GM18951 (cell line): ENCODE measurements at regions of chr1 and their contacts with region 1.

Region 1: GRCh38 chr1:111755331-111756123 is at the start of gene DDX20:
- POLR2A ChIP-seq: peak; percentile 83

Region 2: GRCh38 chr1:111227851-111228747 is 527.4 kb before region 1 on chr1:
- in situ Hi-C with region 1: loop called (anchors 25 kb)
- POLR2A ChIP-seq: no peak

Region 3: DNA sequence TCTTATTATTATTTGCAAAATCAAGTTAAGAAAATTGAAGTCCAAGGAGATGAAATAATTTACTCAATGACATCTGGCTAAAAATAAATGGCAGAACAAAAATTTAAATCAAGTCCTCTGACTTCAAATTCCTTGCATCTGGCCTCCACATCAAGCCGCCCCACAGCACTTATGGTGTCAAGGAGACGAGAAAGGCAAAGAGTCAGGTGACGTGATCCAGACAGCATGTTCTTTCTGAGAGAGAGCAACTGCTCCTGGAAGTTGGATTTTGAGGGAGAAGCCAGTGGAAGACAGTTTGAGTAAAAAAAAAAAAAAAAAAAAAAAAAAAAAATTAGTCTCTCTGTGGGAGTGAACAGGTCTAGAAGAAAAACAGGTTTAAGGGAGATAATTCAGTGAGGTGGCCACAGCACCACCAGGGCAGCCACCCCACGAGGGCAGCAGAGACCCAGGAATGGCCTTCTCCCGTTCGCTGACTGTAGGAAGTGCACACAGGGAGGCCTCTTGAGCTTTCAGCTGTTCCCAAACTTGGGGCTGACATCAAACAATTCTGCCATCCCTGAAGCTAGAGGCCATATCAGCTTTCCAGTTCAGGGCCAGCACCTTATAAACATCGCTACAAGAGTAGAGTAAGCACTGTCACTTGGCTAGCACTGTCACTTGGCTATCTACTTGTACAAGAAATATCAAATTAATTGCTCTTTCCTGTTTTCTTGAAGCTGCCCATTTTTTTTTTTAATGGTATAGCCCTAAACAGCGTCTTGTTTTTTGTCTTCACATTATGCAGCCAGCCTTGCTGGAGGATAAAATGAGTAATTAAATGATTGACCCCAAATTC is 273.9 kb before region 1 on chr1:
- in situ Hi-C with region 1: loop called (anchors 10 kb)
- POLR2A ChIP-seq: no peak

Region 4: GRCh38 chr1:111535256-111536191 is 220.0 kb before region 1 on chr1:
- in situ Hi-C with region 1: no loop called
- POLR2A ChIP-seq: no peak

Region 5: DNA sequence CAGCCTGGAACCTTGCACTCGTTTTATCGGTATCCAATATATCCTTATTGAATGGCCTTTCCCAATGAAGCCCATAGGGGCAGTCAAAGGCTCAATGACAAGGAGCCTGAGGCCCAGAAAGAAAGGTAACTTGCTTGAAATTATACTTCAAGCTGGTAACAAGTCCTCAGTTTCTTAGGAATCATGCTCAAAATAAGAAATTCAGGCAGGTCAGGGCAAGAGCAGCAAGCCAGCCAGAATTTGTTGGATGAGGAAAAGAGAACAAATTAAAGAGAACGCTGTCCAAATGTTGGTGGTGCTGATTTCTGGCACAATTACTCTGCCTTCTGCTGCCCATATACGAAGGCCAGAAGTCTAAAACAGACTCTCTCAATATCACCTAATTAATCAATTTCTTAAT is 77.8 kb after region 1 on chr1:
- in situ Hi-C with region 1: no loop called
- POLR2A ChIP-seq: no peak